ENCODE measurements at regions of chr12 and their contacts with region 1.

Region 1: GRCh38 chr12:92987362-92987761 is 58.3 kb upstream of the EEA1 start:
- DNase-seq: no peak
- H3K4me3 Mint-ChIP-seq: no peak overlapping the region
- H3K27ac Mint-ChIP-seq: no peak overlapping the region
- H3K4me1 Mint-ChIP-seq: peaks cover 22% of the 10 kb centered on the region
- H3K27me3 Mint-ChIP-seq: peaks cover 11% of the 10 kb centered on the region

Region 2: GRCh38 chr12:92859650-92860386 is 127.5 kb before region 1 on chr12:
- CTCF ChIA-PET with region 1: no interaction called
- POLR2A ChIA-PET with region 1: no interaction called
- DNase-seq: no peak
- H3K4me3 Mint-ChIP-seq: no peak overlapping the region
- H3K27ac Mint-ChIP-seq: no peak overlapping the region
- H3K4me1 Mint-ChIP-seq: no peaks in the 10 kb centered on the region
- H3K27me3 Mint-ChIP-seq: no peaks in the 10 kb centered on the region

Region 3: DNA sequence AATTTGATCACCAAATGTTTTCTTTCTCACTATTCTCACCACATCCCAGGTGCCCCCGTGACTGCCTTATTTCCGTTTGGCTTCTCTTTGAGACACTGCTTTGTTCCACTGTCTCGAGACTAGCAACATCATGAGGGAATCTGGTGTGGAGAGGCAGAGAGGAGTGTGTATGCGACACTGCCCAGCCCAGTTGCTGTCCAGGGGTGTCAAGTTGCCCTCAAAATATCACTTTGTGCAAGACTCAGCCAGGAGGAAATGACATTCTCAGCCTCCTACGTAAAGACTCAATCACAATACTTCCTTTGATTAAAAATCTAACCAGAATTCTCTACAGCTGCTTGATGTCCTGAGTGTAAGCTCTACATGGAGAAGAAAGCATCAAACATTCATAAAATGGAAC is 10.0 kb before region 1 on chr12:
- CTCF ChIA-PET with region 1: interaction called, 14 read pairs
- POLR2A ChIA-PET with region 1: no interaction called
- DNase-seq: no peak
- H3K4me3 Mint-ChIP-seq: no peak overlapping the region
- H3K27ac Mint-ChIP-seq: no peak overlapping the region
- H3K4me1 Mint-ChIP-seq: peaks cover 9% of the 10 kb centered on the region
- H3K27me3 Mint-ChIP-seq: peaks cover 8% of the 10 kb centered on the region

Region 4: DNA sequence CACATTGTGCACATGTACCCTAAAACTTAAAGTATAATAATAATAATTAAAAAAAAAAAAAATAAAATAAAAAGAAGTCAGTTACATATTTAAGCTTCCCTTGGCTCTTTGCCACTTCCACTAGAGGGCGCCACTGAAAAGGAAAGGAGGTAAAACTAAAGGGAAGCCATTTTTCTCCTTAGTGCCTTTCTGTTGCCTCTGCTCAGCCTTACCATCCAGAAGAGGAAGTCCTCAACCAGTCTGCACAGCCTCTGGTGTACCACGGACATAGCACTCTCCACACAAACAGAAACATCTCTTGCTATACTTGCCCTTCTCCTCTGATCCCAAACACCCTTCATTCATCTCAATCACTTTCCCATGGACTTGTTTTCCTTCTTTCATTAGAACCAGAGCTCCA is 110.7 kb after region 1 on chr12:
- CTCF ChIA-PET with region 1: interaction called, 14 read pairs
- POLR2A ChIA-PET with region 1: no interaction called
- DNase-seq: peak; percentile 63
- H3K4me3 Mint-ChIP-seq: no peak overlapping the region
- H3K27ac Mint-ChIP-seq: no peak overlapping the region
- H3K4me1 Mint-ChIP-seq: peaks cover 11% of the 10 kb centered on the region
- H3K27me3 Mint-ChIP-seq: no peaks in the 10 kb centered on the region

Region 5: DNA sequence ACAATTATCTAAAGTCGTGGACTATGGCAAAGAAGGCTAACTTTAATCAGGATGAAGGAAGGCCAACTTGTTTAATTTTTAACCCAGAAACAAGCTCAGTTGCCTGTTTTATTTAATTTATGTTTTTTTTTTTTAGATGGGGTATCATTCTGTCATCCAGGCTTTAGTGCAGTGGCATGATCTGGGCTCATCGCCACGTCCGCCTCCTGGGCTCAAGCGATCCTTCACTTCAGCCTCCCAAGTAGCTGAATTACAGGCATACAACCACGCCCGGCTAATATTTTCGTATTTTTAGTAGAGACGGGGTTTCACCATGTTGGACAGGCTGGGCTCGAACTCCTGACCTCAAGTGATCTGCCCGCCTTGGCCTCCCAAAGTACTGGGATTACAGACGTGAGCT is 410.1 kb after region 1 on chr12:
- CTCF ChIA-PET with region 1: interaction called, 47 read pairs
- POLR2A ChIA-PET with region 1: interaction called, 4 read pairs
- DNase-seq: no peak
- H3K4me3 Mint-ChIP-seq: no peak overlapping the region
- H3K27ac Mint-ChIP-seq: no peak overlapping the region
- H3K4me1 Mint-ChIP-seq: peaks cover 1% of the 10 kb centered on the region
- H3K27me3 Mint-ChIP-seq: no peaks in the 10 kb centered on the region

Region 6: GRCh38 chr12:93502802-93503623 is 515.7 kb after region 1 on chr12:
- CTCF ChIA-PET with region 1: interaction called, 12 read pairs
- POLR2A ChIA-PET with region 1: no interaction called
- DNase-seq: peak; percentile 68
- H3K4me3 Mint-ChIP-seq: no peak overlapping the region
- H3K27ac Mint-ChIP-seq: no peak overlapping the region
- H3K4me1 Mint-ChIP-seq: peaks cover 23% of the 10 kb centered on the region
- H3K27me3 Mint-ChIP-seq: no peaks in the 10 kb centered on the region